ENCODE measurements at regions of chr9 and their contacts with region 1.

Region 1: GRCh38 chr9:68779558-68780384 is 74.7 kb downstream of the PIP5K1B start:
- DNase-seq: peak; percentile 88 to 93 (median 88)
- ATAC-seq: peak; percentile 76
- H3K4me3 ChIP-seq: peak overlapping the region; percentile 81
- H3K27ac ChIP-seq: peak overlapping the region; percentile 99
- H3K4me1 ChIP-seq: peaks cover 4 to 39% of the 10 kb centered on the region in 2 experiments; a peak in 4 of 5 replicates
- H3K27me3 ChIP-seq: no peaks in the 10 kb centered on the region
- CTCF ChIP-seq: peak; percentile 31 to 66 (median 40); a peak in 5 of 6 replicates
- EP300 ChIP-seq: peak; percentile 34; the same call in 1 of the 2 replicates
- POLR2A ChIP-seq: peak; percentile 82
- RAD21 ChIP-seq: peak; percentile 29 to 65; a peak in 3 of 4 replicates

Region 2: GRCh38 chr9:68704814-68705530 is 74.8 kb before region 1 on chr9 and contains the start of gene PIP5K1B:
- CTCF ChIA-PET with region 1: no interaction called
- POLR2A ChIA-PET with region 1: interaction called, 4 read pairs
- in situ Hi-C with region 1: loop called (anchors 5 kb)
- intact Hi-C with region 1: loop called (anchors 5 kb)
- DNase-seq: peak; percentile 69 to 84 (median 76)
- ATAC-seq: peak; percentile 92
- H3K4me3 ChIP-seq: peak within 1 kb of the TSS; percentile 75
- H3K27ac ChIP-seq: peak within 1 kb of the TSS; percentile 77
- H3K4me1 ChIP-seq: peaks cover 19 to 21% of the 10 kb centered on the region in 2 experiments; a peak in 4 of 5 replicates
- H3K27me3 ChIP-seq: no peaks in the 10 kb centered on the region
- CTCF ChIP-seq: peak in 1 of 3 experiments; percentile 30; a peak in 1 of 6 replicates
- EP300 ChIP-seq: no peak
- POLR2A ChIP-seq: peak; percentile 59
- RAD21 ChIP-seq: peak in 1 of 2 experiments; percentile 9; a peak in 2 of 4 replicates
- polyA plus RNA-seq, gene PIP5K1B: 3.1 to 6.3 TPM

Region 3: DNA sequence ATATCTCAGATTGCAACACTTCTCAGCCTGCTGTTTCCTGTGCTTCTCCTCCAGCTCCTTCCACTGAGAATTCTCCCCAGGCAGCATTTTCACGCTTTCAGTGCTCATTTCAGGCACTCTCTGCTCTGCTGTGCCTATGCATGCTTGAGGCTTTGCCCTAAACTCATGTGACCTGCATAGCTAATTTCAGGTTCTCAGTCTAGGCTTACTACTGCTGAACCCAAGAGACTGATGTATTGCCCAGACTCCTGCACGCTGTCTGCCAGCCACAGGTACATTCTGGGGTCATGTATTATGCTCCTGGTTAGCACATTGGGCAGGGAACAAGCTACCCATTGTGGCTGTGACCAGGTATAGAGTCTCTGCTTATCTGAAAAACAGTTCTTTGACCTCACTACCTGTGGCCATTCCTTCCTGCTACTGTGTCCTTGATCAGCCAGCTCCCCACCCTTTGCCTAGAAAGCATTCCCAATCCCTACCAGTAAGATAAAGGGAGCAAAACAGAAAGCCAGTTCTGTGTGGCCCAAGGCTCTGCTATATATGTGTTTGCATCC is 40.1 kb before region 1 on chr9:
- CTCF ChIA-PET with region 1: no interaction called
- POLR2A ChIA-PET with region 1: no interaction called
- in situ Hi-C with region 1: no loop called
- intact Hi-C with region 1: loop called (anchors 5 kb)
- DNase-seq: no peak
- ATAC-seq: peak; percentile 22; the same call in 1 of the 3 replicates
- H3K4me3 ChIP-seq: no peak overlapping the region
- H3K27ac ChIP-seq: no peak overlapping the region
- H3K4me1 ChIP-seq: peaks cover 5 to 22% of the 10 kb centered on the region in 2 experiments; a peak in 4 of 5 replicates
- H3K27me3 ChIP-seq: no peaks in the 10 kb centered on the region
- CTCF ChIP-seq: no peak
- EP300 ChIP-seq: no peak
- POLR2A ChIP-seq: no peak
- RAD21 ChIP-seq: no peak

Region 4: GRCh38 chr9:68749568-68750279 is 30.0 kb before region 1 on chr9:
- CTCF ChIA-PET with region 1: no interaction called
- POLR2A ChIA-PET with region 1: no interaction called
- in situ Hi-C with region 1: no loop called
- intact Hi-C with region 1: loop called (anchors 2 kb)
- DNase-seq: no peak
- ATAC-seq: no peak
- H3K4me3 ChIP-seq: no peak overlapping the region
- H3K27ac ChIP-seq: peak overlapping the region; percentile 65; the same call in 2 of the 3 replicates
- H3K4me1 ChIP-seq: peaks cover 6 to 50% of the 10 kb centered on the region in 2 experiments
- H3K27me3 ChIP-seq: no peaks in the 10 kb centered on the region
- CTCF ChIP-seq: 0 out of 6 replicates have a peak, but pooled peaks of 1 of the 3 experiments have one; percentile 6
- EP300 ChIP-seq: no peak
- POLR2A ChIP-seq: no peak
- RAD21 ChIP-seq: 0 out of 4 replicates have a peak, but pooled peaks of 1 of the 2 experiments have one; percentile 18

Region 5: DNA sequence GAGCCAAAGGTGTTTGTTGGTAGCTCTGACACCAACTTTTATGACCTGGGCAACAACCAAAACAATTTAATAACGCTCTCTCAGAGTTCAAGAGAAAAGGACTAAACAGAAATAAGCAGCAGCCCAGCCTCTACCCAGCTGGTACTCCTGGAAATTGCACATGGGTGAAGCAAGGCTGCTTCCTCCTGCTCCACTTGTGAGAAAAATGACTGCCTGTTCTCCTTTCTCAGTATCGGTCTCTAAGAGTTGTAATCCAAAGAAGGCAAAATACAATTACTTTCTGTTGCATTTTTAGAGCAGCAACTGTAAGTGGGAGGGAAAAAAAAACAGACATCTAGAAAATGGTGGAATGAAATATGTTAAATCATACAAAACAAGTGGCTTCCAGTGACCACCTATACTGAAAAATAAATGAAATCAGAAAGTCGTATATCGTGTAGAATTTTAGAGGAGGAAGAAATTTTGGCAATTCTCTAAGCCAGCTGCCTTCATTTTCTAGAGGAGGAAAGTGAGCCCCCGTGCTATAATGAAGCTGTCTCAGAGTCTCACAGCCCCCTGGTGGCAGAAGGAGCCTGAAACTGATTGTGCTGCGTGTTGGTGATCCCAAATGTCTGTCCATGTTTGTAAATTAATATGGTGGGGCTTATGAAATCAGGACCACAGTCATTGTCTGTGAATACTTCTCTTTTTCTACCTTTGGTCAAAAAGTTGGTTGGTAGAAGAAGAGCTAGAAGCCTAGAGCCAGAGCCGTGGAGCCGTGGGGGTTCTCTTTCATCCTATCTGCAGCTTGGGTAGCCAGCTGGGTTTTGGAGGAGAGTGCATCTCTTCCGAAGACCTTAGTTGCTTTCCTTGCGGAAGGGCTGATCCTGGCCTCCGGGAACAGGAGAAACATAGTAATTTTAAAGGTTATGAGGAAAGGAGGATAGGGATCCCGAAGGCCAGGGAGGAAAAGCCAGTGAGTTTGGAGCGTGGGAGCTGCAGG is 65.2 kb after region 1 on chr9:
- CTCF ChIA-PET with region 1: no interaction called
- POLR2A ChIA-PET with region 1: no interaction called
- in situ Hi-C with region 1: no loop called
- intact Hi-C with region 1: loop called (anchors 10 kb)
- DNase-seq: peak; percentile 33 to 75 (median 43)
- ATAC-seq: peak; percentile 95
- H3K4me3 ChIP-seq: no peak overlapping the region
- H3K27ac ChIP-seq: no peak overlapping the region
- H3K4me1 ChIP-seq: no peaks in the 10 kb centered on the region; a peak in 1 of 5 replicates
- H3K27me3 ChIP-seq: no peaks in the 10 kb centered on the region
- CTCF ChIP-seq: peak; percentile 68 to 75 (median 71)
- EP300 ChIP-seq: no peak
- POLR2A ChIP-seq: no peak
- RAD21 ChIP-seq: peak; percentile 63 to 83

Region 6: GRCh38 chr9:69019808-69020207 is 240.0 kb after region 1 on chr9:
- CTCF ChIA-PET with region 1: no interaction called
- POLR2A ChIA-PET with region 1: no interaction called
- in situ Hi-C with region 1: no loop called
- intact Hi-C with region 1: loop called (anchors 5 kb)
- DNase-seq: peak; percentile 53 to 86 (median 69)
- ATAC-seq: peak; percentile 92
- H3K4me3 ChIP-seq: no peak overlapping the region
- H3K27ac ChIP-seq: peak overlapping the region; percentile 97
- H3K4me1 ChIP-seq: peaks cover 26 to 55% of the 10 kb centered on the region in 2 experiments
- H3K27me3 ChIP-seq: no peaks in the 10 kb centered on the region
- CTCF ChIP-seq: no peak
- EP300 ChIP-seq: peak; percentile 94
- POLR2A ChIP-seq: no peak
- RAD21 ChIP-seq: no peak

Measured in K562 (cell line).